ENCODE measurements at regions of chr2 and their contacts with region 1.

Region 1: GRCh38 chr2:73828818-73829570 is at the start of gene STAMBP:
- DNase-seq: peak; percentile 95
- ATAC-seq: peak; percentile 93
- H3K4me3 Mint-ChIP-seq: peak within 1 kb of the TSS; percentile 94
- H3K27ac Mint-ChIP-seq: peak within 1 kb of the TSS; percentile 94
- H3K4me1 Mint-ChIP-seq: peaks cover 49% of the 10 kb centered on the region
- H3K27me3 Mint-ChIP-seq: peaks cover 2% of the 10 kb centered on the region
- total RNA-seq, gene STAMBP: 33.6 to 34.9 TPM

Region 2: DNA sequence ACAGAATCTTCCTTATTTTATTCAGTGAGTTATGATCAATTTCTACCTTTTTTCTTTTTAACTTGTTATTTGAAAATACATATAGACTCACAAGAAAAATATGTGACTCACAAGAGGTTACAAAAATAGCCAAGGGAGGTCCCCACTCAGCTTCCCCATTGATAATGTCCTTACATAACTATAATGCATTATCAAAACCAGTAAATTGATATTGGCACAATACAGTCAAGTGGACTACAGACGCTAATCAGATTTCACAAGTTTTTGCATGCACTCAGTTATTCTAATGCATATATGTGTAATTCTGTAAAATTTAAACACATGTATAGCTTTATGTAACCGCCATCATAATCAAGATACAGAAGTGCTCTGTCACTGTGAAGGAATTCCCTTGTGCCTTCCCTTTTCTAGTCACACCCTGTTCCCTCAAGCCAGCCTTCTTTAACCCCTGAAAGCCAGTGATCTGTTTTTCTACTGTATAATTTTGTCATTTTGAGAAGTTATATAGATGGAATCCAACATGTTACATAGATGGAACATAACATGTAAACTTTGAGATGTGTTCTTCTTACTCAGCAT is 324.9 kb before region 1 on chr2:
- CTCF ChIA-PET with region 1: no interaction called
- POLR2A ChIA-PET with region 1: no interaction called
- DNase-seq: no peak
- ATAC-seq: no peak
- H3K4me3 Mint-ChIP-seq: no peak overlapping the region
- H3K27ac Mint-ChIP-seq: no peak overlapping the region
- H3K4me1 Mint-ChIP-seq: no peaks in the 10 kb centered on the region
- H3K27me3 Mint-ChIP-seq: no peaks in the 10 kb centered on the region

Region 3: DNA sequence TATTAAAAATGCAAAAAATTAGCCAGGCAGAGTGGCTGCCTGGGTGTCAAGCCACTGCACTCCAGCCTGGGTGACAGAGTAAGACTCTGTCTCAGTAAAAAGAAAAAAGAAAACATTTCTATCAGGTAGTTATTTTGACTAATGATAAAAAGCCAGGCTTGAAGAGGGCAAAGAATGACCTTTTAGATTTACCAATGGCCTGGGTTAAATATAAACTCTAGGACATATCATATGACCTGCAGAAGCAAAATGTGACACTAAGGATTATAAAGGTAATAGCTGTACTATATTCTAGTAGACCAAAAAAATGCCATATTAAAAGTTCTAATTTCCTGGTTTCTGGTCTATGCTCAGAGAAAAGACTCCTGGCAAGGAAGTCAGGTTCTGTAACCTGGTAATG is 16.4 kb before region 1 on chr2:
- CTCF ChIA-PET with region 1: interaction called, 15 read pairs
- POLR2A ChIA-PET with region 1: no interaction called
- DNase-seq: no peak
- ATAC-seq: no peak
- H3K4me3 Mint-ChIP-seq: no peak overlapping the region
- H3K27ac Mint-ChIP-seq: no peak overlapping the region
- H3K4me1 Mint-ChIP-seq: peaks cover 9% of the 10 kb centered on the region
- H3K27me3 Mint-ChIP-seq: peaks cover 15% of the 10 kb centered on the region

Region 4: GRCh38 chr2:73851274-73851673 is 22.3 kb after region 1 on chr2:
- CTCF ChIA-PET with region 1: interaction called, 10 read pairs
- POLR2A ChIA-PET with region 1: no interaction called
- DNase-seq: no peak
- ATAC-seq: peak; percentile 53
- H3K4me3 Mint-ChIP-seq: no peak overlapping the region
- H3K27ac Mint-ChIP-seq: no peak overlapping the region
- H3K4me1 Mint-ChIP-seq: no peaks in the 10 kb centered on the region
- H3K27me3 Mint-ChIP-seq: no peaks in the 10 kb centered on the region

Region 5: GRCh38 chr2:73985308-73986084 is 156.5 kb after region 1 on chr2:
- CTCF ChIA-PET with region 1: interaction called, 71 read pairs
- POLR2A ChIA-PET with region 1: no interaction called
- DNase-seq: peak; percentile 62
- ATAC-seq: peak; percentile 35
- H3K4me3 Mint-ChIP-seq: peak overlapping the region; percentile 79
- H3K27ac Mint-ChIP-seq: peak overlapping the region; percentile 90
- H3K4me1 Mint-ChIP-seq: peaks cover 77% of the 10 kb centered on the region
- H3K27me3 Mint-ChIP-seq: peaks cover 6% of the 10 kb centered on the region

Region 6: GRCh38 chr2:74119912-74120825 is 291.2 kb after region 1 on chr2:
- CTCF ChIA-PET with region 1: interaction called, 15 read pairs
- POLR2A ChIA-PET with region 1: interaction called, 3 read pairs
- DNase-seq: peak; percentile 88
- ATAC-seq: peak; percentile 97
- H3K4me3 Mint-ChIP-seq: peak overlapping the region; percentile 82
- H3K27ac Mint-ChIP-seq: peak overlapping the region; percentile 96
- H3K4me1 Mint-ChIP-seq: peaks cover 11% of the 10 kb centered on the region
- H3K27me3 Mint-ChIP-seq: peaks cover 2% of the 10 kb centered on the region

Region 7: DNA sequence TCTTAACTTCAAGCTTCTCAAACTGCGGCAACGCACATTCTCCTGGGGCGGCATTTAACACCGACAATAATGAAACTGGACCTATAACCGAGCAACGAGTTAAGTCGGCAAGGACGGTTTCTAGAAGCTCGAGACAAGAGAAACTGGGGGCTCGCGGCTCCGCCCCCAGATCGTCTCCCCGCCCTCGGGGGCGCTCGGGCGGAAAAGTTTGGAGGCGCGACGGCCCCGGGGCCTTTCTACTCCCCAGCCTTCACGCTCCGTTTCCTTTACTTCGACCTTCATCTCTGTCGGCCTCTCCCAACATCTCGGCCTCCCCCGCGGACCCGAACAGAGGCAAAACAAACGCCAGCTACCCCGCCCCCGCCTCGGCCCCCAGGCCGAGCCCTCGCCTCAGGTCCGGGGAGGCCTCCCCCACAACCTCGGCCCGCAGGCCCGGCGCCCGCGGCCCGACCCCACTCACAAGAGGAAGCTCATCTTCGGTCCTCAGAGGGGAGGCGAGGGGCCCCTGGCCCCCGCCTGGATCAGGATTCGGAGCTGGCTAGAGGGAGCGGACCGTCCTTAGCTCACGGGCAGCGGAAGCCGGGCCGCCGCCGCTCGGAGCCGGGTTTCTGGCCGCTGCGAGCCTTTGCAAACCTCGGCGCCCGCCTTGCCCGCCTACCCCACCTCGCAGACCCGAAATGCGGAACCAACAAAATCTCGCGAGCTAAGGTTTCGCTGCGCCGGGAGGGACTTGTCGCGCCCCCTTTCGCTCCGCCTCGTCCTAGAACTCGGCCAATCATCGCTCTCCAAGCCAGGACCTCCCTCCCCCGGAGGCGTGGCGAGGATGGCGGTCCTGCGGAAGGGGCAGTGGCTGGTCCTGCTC is 349.4 kb after region 1 on chr2 and contains the start of gene MOB1A:
- CTCF ChIA-PET with region 1: interaction called, 24 read pairs
- POLR2A ChIA-PET with region 1: interaction called, 16 read pairs
- DNase-seq: peak; percentile 99
- ATAC-seq: peak; percentile 96
- H3K4me3 Mint-ChIP-seq: peak within 1 kb of the TSS; percentile 89
- H3K27ac Mint-ChIP-seq: peak within 1 kb of the TSS; percentile 95
- H3K4me1 Mint-ChIP-seq: peaks cover 43% of the 10 kb centered on the region
- H3K27me3 Mint-ChIP-seq: no peaks in the 10 kb centered on the region
- total RNA-seq, gene MOB1A: 191 to 208 TPM

Region 8: GRCh38 chr2:74334931-74335333 is 505.9 kb after region 1 on chr2:
- CTCF ChIA-PET with region 1: interaction called, 43 read pairs
- POLR2A ChIA-PET with region 1: no interaction called
- DNase-seq: peak; percentile 81
- ATAC-seq: peak; percentile 88
- H3K4me3 Mint-ChIP-seq: no peak overlapping the region
- H3K27ac Mint-ChIP-seq: no peak overlapping the region
- H3K4me1 Mint-ChIP-seq: peaks cover 4% of the 10 kb centered on the region
- H3K27me3 Mint-ChIP-seq: no peaks in the 10 kb centered on the region

Measured in activated CD8-positive, alpha-beta T cell treated with anti-CD3 and anti-CD28 coated beads, Interleukin-2, amount 10 ng/mL, durations not matched to agents 7 days and 5 days (primary cell).